ENCODE measurements at regions of chr14 and their contacts with region 1.

Region 1: DNA sequence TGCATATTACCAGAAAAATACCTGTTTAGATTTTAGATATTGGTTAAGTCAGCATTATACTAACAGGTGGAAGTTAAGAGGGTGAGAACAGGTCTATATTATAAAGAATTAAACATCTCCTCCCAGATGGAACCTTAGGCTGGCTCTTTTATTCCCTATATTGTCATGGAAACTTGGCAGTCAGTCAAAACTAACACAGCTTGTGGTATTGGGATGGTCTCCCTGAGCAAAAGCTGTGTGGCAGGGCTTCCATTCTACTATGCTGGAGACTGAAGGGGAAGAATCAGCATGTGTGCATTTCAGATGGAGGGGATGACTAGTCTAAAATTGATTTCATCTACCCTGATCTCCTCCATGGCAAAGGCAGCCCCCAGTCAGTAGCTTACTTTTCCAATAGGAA is 66.7 kb downstream of the SMOC1 start:
- DNase-seq: peak; percentile 31
- H3K4me3 ChIP-seq: no peak overlapping the region
- H3K27ac ChIP-seq: no peak overlapping the region
- H3K4me1 ChIP-seq: peaks cover 3% of the 10 kb centered on the region
- H3K27me3 ChIP-seq: no peaks in the 10 kb centered on the region
- CTCF ChIP-seq: no peak

Region 2: DNA sequence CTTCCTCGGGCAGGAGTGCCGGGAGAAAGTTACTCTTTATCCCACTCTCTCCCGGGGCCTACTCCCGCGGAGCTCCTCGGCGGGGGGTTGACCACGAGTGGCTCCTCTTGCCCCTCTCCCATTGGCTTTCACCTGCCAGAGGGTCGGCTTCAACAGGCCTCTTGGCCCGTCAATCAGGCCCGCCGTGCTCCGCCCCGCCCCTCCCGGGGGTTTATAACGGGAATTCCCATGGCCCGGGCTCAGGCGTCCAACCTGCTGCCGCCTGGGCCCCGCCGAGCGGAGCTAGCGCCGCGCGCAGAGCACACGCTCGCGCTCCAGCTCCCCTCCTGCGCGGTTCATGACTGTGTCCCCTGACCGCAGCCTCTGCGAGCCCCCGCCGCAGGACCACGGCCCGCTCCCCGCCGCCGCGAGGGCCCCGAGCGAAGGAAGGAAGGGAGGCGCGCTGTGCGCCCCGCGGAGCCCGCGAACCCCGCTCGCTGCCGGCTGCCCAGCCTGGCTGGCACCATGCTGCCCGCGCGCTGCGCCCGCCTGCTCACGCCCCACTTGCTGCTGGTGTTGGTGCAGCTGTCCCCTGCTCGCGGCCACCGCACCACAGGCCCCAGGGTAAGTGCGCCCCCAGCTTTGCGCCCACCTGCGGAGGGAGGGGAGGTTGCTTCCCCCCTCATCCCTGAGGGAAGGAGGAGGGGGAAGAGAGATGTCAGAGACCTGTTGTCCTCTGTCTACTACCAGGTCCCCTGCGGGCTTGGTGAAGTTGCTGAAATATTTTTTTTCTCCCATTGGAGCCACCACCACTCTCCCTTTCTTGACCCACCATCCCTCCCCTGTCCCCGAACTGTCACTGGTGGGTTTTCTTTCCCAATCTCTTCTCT is 66.5 kb before region 1 on chr14 and contains the start of gene SMOC1:
- CTCF ChIA-PET with region 1: no interaction called
- dilution Hi-C with region 1: loop called (anchors 5 kb)
- in situ Hi-C with region 1: no loop called
- intact Hi-C with region 1: no loop called
- DNase-seq: peak; percentile 85
- H3K4me3 ChIP-seq: peak within 1 kb of the TSS in 2 of 3 experiments; percentile 49 to 50
- H3K27ac ChIP-seq: no peak within 1 kb of the TSS
- H3K4me1 ChIP-seq: peaks cover 5% of the 10 kb centered on the region
- H3K27me3 ChIP-seq: no peaks in the 10 kb centered on the region
- CTCF ChIP-seq: no peak
- total RNA-seq, gene SMOC1: 22.3 to 44.9 TPM